Activated CD4-positive, alpha-beta T cell treated with anti-CD3 and anti-CD28 coated beads, Interleukin-2, amount 10 ng/mL, durations not matched to agents 24 days and 14 days (primary cell): ENCODE measurements at regions of chr7 and their contacts with region 1.

Region 1: DNA sequence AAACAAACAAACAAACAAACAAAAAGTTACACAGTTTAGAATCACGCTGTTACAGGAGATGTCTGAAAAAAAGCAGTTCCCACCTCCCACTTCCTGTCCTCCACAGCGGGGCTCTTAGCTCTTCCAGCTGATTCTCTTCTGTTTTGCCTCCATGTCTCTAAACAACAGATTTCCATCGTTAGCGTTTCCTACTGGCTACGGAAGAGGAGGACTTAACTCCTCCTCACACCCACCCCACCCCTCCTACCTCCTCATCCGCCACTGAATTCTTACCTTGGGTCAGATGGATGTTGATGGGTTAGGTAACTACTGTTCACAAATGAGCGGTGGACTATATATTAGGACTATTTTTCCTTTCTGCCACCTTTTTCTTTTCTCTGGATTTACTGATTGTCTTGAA is 36.8 kb upstream of the NUB1 start:
- DNase-seq: no peak
- H3K4me3 Mint-ChIP-seq: peak overlapping the region; percentile 55
- H3K27ac Mint-ChIP-seq: no peak overlapping the region
- H3K4me1 Mint-ChIP-seq: peaks cover 16% of the 10 kb centered on the region
- H3K27me3 Mint-ChIP-seq: peaks cover 22% of the 10 kb centered on the region

Region 2: DNA sequence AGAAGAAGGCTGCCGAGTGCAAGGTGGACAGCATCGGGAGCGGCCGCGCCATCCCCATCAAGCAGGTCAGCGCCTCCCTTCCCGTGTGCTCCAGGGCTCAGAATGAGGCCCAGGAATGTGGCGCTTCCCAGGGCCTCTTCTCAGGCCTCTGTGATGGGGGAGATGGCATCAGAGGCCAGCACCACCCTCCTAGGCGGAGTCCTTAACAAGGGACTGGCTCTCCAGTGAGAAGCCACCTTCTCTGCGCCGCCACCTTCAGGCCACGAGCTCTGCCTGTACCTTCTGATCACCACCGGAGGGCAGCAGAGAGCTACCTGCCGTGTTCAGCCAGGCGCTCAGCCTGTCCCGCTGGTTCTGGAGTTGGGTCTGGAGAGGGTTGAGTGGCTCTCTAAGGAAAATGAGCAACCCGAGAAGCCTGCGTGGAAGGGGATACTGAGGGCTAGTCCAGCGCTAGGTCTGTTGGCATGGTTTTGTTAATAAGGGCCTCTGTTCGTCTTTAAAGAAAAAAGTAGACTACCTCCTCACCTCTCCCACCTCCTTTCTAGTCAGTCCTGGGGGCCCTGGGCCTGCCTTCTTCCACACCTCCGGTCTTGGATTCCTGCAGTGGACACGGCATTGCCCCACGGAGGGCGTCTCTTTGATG is 180.9 kb before region 1 on chr7:
- intact Hi-C with region 1: loop called (anchors 1 kb)
- DNase-seq: peak; percentile 95
- H3K4me3 Mint-ChIP-seq: no peak overlapping the region
- H3K27ac Mint-ChIP-seq: no peak overlapping the region
- H3K4me1 Mint-ChIP-seq: no peaks in the 10 kb centered on the region
- H3K27me3 Mint-ChIP-seq: no peaks in the 10 kb centered on the region

Region 3: GRCh38 chr7:151168003-151168786 is 136.7 kb before region 1 on chr7:
- intact Hi-C with region 1: no loop called
- DNase-seq: peak; percentile 89
- H3K4me3 Mint-ChIP-seq: peak overlapping the region; percentile 74
- H3K27ac Mint-ChIP-seq: no peak overlapping the region
- H3K4me1 Mint-ChIP-seq: peaks cover 12% of the 10 kb centered on the region
- H3K27me3 Mint-ChIP-seq: peaks cover 43% of the 10 kb centered on the region

Region 4: GRCh38 chr7:151680721-151681209 is 375.9 kb after region 1 on chr7:
- intact Hi-C with region 1: no loop called
- DNase-seq: no peak
- H3K4me3 Mint-ChIP-seq: no peak overlapping the region
- H3K27ac Mint-ChIP-seq: no peak overlapping the region
- H3K4me1 Mint-ChIP-seq: peaks cover 7% of the 10 kb centered on the region
- H3K27me3 Mint-ChIP-seq: peaks cover 3% of the 10 kb centered on the region